PC-3 (cell line): ENCODE measurements at regions of chr1 and their contacts with region 1.

Region 1: DNA sequence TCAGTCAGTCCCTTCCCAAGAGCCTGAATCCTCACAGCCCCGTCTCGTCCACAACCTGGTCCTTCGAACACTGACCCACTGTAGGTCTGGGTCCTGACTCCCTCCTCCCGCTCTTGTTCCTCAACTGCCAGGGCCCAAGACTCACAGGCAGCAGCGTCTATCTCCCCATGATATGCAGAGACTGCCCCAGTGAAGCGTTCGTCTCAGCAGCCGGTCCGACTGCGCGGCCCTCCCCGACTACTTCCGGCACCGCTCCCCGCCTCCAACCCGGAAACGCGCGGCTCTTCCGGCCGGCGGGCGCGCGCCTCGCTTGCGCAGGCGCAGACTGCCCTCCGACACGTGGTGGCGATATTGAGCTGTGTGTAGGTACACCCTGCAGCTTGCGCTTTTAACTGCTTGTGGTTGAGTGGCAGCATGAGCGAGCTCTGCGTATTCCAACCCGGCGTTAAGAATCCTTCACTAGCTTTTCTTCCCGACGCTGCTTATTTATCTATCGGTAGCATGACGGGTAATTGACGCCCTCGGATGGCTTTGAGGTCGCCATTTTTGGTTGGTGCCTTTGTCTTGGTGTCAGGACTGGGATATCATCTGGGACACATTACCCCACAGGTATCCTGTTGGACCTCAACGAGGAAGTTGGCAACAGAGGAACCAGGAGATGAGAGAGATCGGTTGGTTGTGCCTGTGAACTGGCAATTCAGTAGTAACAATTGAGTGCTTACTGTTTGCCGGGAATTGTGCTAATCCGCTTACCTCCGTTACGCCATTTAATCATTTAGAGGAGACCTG is at the start of gene TAF12:
- DNase-seq: peak; percentile 98
- ATAC-seq: peak; percentile 90
- H3K4me3 ChIP-seq: peak within 1 kb of the TSS; percentile 97
- H3K27ac ChIP-seq: peak within 1 kb of the TSS; percentile 77
- H3K4me1 ChIP-seq: peaks cover 29% of the 10 kb centered on the region
- H3K27me3 ChIP-seq: no peaks in the 10 kb centered on the region
- CTCF ChIP-seq: peak; percentile 44; the same call in 1 of the 2 replicates
- total RNA-seq, gene TAF12: 33.0 and 44.1 TPM in 2 replicates

Region 2: GRCh38 chr1:28581536-28582247 is 61.3 kb before region 1 on chr1:
- CTCF ChIA-PET with region 1: no interaction called
- POLR2A ChIA-PET with region 1: interaction called, 38 read pairs
- intact Hi-C with region 1: no loop called
- DNase-seq: peak; percentile 95
- ATAC-seq: peak; percentile 94
- H3K4me3 ChIP-seq: peak overlapping the region; percentile 99
- H3K27ac ChIP-seq: peak overlapping the region; percentile 66
- H3K4me1 ChIP-seq: peaks cover 15% of the 10 kb centered on the region
- H3K27me3 ChIP-seq: no peaks in the 10 kb centered on the region
- CTCF ChIP-seq: 0 out of 2 replicates have a peak, but pooled peaks have one; percentile 7

Region 3: DNA sequence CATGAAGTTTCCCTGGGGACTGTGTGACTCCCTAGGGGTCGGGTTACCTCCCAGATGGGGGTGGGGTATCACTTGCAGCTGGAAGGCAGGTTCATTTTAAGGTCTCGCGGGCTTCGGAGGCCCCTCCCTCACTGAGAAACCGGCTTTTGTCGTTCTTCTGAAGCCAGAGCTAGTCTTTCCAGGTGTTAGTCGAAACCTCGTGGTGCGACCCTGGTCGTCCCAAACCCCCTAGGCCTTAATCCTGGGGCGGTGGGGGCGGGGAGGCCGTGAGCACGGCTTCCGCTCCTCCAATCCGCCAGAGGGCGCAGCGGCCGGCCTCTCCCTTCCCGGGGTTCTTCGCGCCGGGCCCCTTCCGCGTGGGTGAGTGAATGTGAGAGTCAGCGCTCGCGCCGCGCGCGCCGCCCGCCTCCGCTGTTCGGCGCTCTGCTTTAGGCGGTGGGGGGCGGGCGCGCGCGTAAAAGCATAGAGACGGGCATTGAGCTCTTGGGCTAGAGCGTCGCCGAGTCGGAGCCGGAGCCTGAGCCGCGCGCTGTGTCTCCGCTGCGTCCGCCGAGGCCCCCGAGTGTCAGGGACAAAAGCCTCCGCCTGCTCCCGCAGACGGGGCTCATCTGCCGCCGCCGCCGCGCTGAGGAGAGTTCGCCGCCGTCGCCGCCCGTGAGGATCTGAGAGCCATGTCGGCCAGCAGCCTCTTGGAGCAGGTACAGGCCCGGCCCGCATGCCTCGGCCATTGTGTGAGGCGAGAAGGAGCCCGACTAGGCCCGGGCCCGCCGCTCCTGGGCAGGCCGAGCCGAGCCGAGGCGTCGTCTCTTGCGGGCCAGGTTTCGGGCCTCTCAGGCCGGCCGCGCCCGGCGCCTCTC is 93.6 kb after region 1 on chr1 and contains the start of gene YTHDF2:
- CTCF ChIA-PET with region 1: interaction called, 12 read pairs
- POLR2A ChIA-PET with region 1: interaction called, 32 read pairs
- intact Hi-C with region 1: loop called (anchors 1 kb)
- DNase-seq: peak; percentile 97
- ATAC-seq: peak; percentile 95
- H3K4me3 ChIP-seq: peak within 1 kb of the TSS; percentile 90
- H3K27ac ChIP-seq: peak within 1 kb of the TSS; percentile 70
- H3K4me1 ChIP-seq: peaks cover 21% of the 10 kb centered on the region
- H3K27me3 ChIP-seq: no peaks in the 10 kb centered on the region
- CTCF ChIP-seq: peak; percentile 92
- total RNA-seq, gene YTHDF2: 49.8 and 55.0 TPM in 2 replicates

Region 4: GRCh38 chr1:28811766-28812668 is 169.0 kb after region 1 on chr1 and contains the start of gene OPRD1:
- CTCF ChIA-PET with region 1: no interaction called
- POLR2A ChIA-PET with region 1: interaction called, 11 read pairs
- intact Hi-C with region 1: no loop called
- DNase-seq: no peak
- ATAC-seq: no peak
- H3K4me3 ChIP-seq: no peak within 1 kb of the TSS
- H3K27ac ChIP-seq: no peak within 1 kb of the TSS
- H3K4me1 ChIP-seq: no peaks in the 10 kb centered on the region
- H3K27me3 ChIP-seq: peaks cover 49% of the 10 kb centered on the region
- CTCF ChIP-seq: no peak
- total RNA-seq, gene OPRD1: not detected in 2 replicates

Region 5: DNA sequence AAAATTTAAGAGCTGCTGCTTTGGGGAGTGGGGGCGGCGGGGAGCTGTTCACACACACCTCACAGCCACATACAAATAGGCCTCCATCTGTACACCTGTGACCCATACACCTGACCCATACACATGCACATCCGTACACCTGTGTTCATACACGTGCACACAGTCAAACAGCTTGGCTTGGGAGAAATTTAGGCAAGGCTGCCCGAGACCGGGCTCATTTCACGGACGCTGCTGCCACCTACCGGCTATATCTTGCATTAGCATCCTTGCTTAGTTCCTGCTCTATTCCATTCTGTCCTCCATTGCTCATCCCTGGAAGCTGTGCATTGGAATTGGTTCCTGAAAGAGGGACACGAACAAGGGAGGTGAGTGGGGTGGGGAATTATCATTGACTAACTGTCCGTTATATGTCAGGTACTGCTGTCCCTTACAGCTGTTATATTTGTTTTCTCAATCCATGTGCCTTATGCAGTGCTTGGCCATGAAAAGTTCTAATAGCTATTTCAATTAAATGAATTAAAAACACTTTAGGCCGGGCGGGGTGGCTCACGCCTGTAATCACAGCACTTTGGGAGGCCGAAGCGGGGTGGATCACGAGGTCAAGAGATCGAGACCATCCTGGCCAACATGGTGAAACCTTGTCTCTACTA is 234.2 kb after region 1 on chr1:
- CTCF ChIA-PET with region 1: interaction called, 13 read pairs
- POLR2A ChIA-PET with region 1: interaction called, 12 read pairs
- intact Hi-C with region 1: loop called (anchors 2 kb)
- DNase-seq: peak; percentile 87
- ATAC-seq: peak; percentile 77
- H3K4me3 ChIP-seq: no peak overlapping the region
- H3K27ac ChIP-seq: no peak overlapping the region
- H3K4me1 ChIP-seq: peaks cover 4% of the 10 kb centered on the region
- H3K27me3 ChIP-seq: no peaks in the 10 kb centered on the region
- CTCF ChIP-seq: peak; percentile 95

Region 6: GRCh38 chr1:28914228-28915030 is 271.4 kb after region 1 on chr1 and contains the start of gene EPB41:
- CTCF ChIA-PET with region 1: no interaction called
- POLR2A ChIA-PET with region 1: interaction called, 42 read pairs
- intact Hi-C with region 1: no loop called
- DNase-seq: peak; percentile 92
- ATAC-seq: peak; percentile 88
- H3K4me3 ChIP-seq: peak within 1 kb of the TSS; percentile 75
- H3K27ac ChIP-seq: peak within 1 kb of the TSS; percentile 28
- H3K4me1 ChIP-seq: peaks cover 14% of the 10 kb centered on the region
- H3K27me3 ChIP-seq: no peaks in the 10 kb centered on the region
- CTCF ChIP-seq: no peak
- total RNA-seq, gene EPB41: 41.5 and 44.9 TPM in 2 replicates